Mammary epithelial cell (primary cell): ENCODE measurements at regions of chr14 and their contacts with region 1.

Region 1: DNA sequence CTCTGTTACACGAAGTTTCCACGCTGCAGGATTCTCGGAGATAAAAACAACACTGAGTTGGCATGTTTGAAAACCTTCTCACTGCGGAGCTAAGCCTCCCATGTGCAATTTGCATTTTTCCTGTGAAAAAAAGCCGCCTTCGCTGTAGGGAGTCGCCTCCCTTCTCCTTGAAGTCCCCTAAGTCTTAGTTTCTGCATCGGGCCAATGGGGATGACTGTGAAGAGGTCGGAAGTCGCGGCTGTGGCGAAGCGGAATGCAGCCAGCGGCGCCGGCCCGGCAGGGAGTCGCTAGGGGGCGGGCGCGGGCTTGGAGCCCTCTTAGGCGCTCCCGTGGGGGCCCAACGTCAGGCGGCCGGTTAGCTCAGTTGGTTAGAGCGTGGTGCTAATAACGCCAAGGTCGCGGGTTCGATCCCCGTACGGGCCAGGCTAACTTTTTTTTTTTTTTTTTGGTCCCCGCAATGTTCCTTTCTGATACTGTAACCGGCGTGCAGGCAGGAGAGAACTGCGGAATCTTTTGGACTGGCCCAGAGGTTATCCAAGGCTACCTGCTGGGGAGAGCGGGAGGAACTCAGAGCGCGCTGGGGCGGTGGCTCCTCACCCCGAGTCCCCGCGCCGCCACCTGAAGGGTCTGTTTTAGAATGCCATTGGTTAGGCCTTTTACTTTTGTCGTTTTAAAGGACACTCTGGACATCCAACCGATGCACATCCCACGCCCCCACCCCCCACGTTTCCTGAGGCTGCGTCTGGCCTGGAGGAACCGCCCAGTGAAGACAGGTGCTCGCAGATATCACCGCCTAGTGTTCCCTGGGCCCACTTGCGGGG is 2.6 kb upstream of the ZNF839 start:
- DNase-seq: peak; percentile 82
- H3K4me3 ChIP-seq: peak overlapping the region; percentile 47 to 67 (median 48)
- H3K27ac ChIP-seq: peak overlapping the region; percentile 50
- H3K4me1 ChIP-seq: peaks cover 52% of the 10 kb centered on the region
- H3K27me3 ChIP-seq: no peaks in the 10 kb centered on the region
- CTCF ChIP-seq: peak; percentile 37 to 86

Region 2: DNA sequence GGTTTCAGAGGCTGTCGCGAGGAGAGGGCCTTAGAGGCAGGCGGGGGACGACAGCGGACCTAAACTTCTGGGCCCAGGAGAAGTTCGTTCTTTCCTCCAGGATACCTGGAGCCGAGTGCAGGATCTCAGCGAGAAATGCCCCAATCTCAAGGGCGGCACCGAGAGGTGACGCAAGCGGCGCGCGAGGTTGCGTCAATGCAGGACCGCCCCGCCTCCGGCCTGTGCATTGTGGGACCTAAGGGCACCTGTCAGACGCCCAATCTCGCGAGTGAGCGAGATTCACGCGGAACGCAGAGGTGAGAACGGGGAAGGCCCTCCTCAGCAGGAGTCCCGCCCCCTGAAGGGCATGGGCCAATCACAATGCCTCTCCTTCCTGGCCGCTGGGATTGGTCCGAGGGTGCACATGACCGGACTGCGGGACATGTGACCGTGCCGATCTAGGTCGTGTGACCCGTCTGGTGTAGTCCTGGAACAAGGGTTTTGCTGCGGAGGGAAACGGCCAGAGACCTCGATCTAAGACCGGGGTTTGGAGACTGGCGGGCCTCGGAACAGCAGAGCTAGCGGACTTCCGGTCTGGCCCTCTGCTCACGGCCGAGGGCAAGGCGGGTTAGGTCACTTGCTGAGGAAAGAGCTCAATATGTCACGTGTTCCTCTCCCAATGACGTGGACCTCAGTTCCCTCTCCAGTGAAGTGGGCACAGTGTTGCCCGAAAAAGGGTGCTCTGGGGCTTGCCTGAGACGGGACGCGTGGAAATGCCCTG is 368.9 kb before region 1 on chr14:
- CTCF ChIA-PET with region 1: no interaction called
- dilution Hi-C with region 1: no loop called
- in situ Hi-C with region 1: no loop called
- intact Hi-C with region 1: loop called (anchors 5 kb)
- DNase-seq: peak; percentile 100
- H3K4me3 ChIP-seq: peak overlapping the region; percentile 72 to 92 (median 83)
- H3K27ac ChIP-seq: peak overlapping the region; percentile 95
- H3K4me1 ChIP-seq: peaks cover 15% of the 10 kb centered on the region
- H3K27me3 ChIP-seq: no peaks in the 10 kb centered on the region
- CTCF ChIP-seq: no peak

Region 3: DNA sequence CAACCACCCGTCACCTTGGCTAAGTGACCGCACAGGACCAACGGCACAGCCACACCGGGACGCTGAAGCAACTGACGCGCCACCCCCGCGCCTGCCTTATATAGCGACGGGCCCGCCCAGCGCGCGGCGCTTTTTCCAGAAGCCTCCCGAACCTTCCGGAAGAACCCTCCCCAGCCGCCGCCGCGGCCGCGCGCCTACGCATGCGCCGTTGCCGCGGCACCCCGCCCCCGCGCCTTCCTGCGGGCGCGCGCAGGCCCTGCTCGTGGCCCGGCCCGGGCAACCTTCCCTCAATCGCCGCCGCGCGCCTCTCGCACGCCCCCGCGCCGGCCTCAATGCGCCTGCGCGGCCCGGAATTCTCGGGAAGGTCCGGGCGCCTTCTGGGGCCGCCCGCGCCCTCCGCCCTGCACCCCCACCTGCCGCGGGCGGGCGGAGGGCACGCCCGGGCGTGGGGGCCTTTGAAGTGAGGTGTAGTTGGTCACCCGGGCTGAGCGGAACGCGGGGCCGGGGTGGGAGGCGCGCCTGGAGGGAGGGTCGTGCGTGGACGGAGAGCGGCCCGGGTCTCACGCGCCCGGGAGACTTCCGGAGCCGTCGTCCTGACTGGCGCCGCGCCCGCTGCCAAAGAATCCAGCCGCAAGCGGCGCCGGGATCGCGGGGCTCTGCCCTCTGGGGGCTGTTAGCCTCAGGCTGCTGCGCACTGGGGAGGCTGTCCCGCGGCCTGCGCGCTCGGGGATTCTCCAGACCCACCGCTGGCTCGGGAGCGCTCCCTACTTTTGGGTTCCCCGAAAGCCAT is 229.8 kb before region 1 on chr14 and contains the start of gene HSP90AA1:
- CTCF ChIA-PET with region 1: no interaction called
- dilution Hi-C with region 1: no loop called
- in situ Hi-C with region 1: loop called in 1 of 2 experiments (anchors 25 kb)
- intact Hi-C with region 1: no loop called
- DNase-seq: peak; percentile 90
- H3K4me3 ChIP-seq: peak within 1 kb of the TSS; percentile 66 to 86 (median 78)
- H3K27ac ChIP-seq: peak within 1 kb of the TSS; percentile 74
- H3K4me1 ChIP-seq: peaks cover 37% of the 10 kb centered on the region
- H3K27me3 ChIP-seq: no peaks in the 10 kb centered on the region
- CTCF ChIP-seq: peak in 1 of 2 donors; percentile 4
- total RNA-seq, gene HSP90AA1: 310 to 486 TPM

Region 4: DNA sequence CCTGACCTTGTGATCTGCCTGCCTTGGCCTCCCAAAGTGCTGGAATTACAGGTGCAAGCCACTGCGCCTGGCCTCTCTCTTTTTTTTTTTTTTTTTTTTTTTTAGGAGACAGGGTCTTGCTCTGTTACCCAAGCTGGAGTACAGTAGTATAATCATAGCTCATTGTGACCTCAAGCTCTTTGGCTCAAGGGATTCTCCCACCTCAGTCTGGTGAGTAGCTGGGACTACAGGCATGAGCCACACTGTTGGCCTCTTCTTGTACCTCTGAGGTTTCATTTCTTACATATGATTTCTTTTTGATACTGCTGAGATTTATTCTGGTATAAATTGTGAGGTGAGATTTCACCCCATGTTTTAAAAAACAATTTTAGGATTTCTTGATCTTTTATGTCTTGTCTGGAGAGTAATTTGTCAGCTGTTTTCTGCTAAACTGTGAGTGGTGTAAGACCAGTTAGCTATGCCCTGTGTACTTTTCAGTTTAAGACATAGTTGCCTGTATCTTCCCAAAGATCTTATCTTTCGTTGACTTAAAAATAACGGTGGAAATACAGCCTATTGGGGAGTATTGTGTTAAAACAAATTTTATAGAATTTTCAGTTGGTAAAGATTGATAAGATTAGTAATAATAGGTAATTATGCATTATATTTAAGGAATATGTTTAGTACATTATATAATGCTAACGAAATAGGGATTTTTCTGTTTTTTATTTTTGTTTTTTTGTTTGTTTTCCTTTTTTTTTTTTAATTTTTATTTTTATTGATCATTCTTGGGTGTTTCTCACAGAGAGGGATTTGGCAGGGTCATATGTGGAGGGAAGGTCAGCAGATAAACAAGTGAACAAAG is 145.6 kb before region 1 on chr14:
- CTCF ChIA-PET with region 1: interaction called, 19 read pairs
- dilution Hi-C with region 1: no loop called
- in situ Hi-C with region 1: no loop called
- intact Hi-C with region 1: no loop called
- DNase-seq: no peak
- H3K4me3 ChIP-seq: no peak overlapping the region
- H3K27ac ChIP-seq: no peak overlapping the region
- H3K4me1 ChIP-seq: no peaks in the 10 kb centered on the region
- H3K27me3 ChIP-seq: no peaks in the 10 kb centered on the region
- CTCF ChIP-seq: no peak

Region 5: GRCh38 chr14:102235275-102235897 is 81.6 kb before region 1 on chr14:
- CTCF ChIA-PET with region 1: interaction called, 6 read pairs
- dilution Hi-C with region 1: no loop called
- in situ Hi-C with region 1: loop called (anchors 5 kb)
- intact Hi-C with region 1: loop called (anchors 1 kb)
- DNase-seq: peak; percentile 64
- H3K4me3 ChIP-seq: no peak overlapping the region
- H3K27ac ChIP-seq: no peak overlapping the region
- H3K4me1 ChIP-seq: peaks cover 9% of the 10 kb centered on the region
- H3K27me3 ChIP-seq: no peaks in the 10 kb centered on the region
- CTCF ChIP-seq: peak; percentile 69 to 93

Region 6: DNA sequence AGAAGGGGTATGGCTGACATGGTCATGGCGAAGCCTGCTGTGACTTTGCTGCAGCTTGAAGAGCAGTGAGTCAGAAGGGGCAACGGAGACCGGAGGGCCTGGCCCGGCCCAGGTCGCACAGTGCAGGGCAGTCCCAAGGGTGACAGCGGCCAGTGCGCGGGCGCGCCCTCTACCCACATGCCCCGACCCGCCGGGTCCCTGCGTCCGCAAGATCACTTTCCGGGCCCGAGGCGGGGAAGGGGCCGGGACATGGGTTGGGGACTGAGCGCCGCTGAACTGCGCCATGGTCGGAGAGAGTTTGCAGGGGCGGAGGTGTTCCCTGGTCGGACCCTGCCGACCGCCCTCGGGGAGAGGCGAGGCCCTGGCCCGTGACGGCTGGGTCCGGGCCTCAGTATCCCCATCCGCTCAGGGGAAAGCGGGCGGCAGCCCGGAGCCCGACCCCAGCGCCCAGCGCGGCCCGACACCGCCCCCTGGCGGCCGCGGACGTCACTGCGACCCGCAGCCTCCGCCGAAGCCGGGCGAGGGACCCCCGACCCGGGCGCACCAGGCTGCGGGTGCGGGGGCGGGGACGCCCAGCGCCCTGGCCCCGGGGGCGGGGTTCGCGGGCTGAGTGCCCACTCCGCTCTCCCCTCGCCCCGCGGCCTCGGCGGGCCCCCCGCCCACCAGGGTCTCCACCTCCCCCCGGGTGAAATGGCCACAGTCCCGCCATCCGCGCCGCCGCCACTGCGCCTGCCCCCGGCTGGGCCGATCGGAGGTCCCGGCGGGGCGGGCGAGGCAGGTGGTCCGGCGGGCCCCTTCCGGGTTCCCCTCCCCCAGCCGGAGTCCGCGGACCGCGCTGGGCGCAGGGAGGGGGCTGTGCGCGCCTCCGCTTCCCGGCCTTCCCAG is 199.8 kb after region 1 on chr14:
- CTCF ChIA-PET with region 1: interaction called, 3 read pairs
- dilution Hi-C with region 1: no loop called
- in situ Hi-C with region 1: no loop called
- intact Hi-C with region 1: loop called (anchors 1 kb)
- DNase-seq: peak; percentile 35
- H3K4me3 ChIP-seq: peak overlapping the region; percentile 35 to 73 (median 54)
- H3K27ac ChIP-seq: no peak overlapping the region
- H3K4me1 ChIP-seq: peaks cover 6% of the 10 kb centered on the region
- H3K27me3 ChIP-seq: no peaks in the 10 kb centered on the region
- CTCF ChIP-seq: peak; percentile 55 to 63